Ascending aorta (tissue), 2 donors: ENCODE measurements at regions of chr19 and their contacts with region 1.

Region 1: GRCh38 chr19:9323919-9324583 is at the start of gene ZNF559:
- DNase-seq: peak; percentile 70 to 96
- H3K4me3 ChIP-seq: peak within 1 kb of the TSS; percentile 72 to 76
- H3K27ac ChIP-seq: peak within 1 kb of the TSS; percentile 87 to 90
- H3K4me1 ChIP-seq: peaks cover 0 to 7% of the 10 kb centered on the region in 2 donors
- H3K27me3 ChIP-seq: no peaks in the 10 kb centered on the region
- CTCF ChIP-seq: peak in 2 of 3 experiments; percentile 22 to 29
- total RNA-seq, gene ZNF559: 1.5 TPM

Region 2: DNA sequence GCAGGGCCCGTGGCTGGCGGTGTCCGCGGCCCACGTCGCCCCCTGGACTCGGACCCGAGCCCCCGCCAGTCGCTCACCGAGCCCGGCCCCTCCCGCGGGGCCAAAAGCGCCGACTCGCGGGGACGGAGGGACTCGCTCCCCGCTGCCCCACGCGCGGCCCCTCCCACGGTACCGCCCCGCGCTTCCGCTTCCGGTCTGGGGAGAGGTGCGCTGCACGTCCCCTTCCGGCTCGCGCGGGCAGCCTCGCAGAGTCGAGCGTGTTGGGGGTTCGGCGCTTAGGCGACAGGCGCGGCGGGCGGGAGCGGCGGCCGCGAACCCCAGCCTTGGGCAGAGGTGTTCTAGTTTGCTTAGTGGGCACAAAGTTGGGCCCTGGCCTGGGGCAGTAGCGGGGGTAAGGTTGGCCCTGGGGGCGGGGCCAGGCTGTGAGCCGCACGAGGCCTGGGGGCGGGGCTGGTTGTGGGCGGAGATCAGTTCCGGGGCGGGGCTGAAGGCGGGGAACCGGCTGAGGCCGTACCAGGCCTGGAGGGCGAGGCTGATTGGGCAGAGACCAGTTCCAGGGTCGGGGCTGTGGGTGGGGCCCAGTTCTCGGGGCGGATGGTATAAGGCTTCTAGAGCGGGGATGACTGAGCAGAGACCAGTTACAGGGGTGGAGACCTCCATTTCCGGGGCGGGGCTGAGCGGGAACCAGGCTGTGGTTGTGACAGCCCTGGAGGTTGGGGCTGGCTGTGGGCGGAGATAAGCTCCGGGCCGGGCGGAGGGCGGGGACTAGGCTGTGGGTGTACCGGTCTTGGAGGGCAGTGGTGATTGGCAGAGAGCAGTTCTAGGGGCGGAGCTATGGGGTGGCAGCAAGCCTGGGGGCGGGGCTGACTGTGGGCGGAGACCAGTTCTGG is 491.7 kb before region 1 on chr19 and contains the starts of genes MBD3L1 and ZNF558:
- intact Hi-C with region 1: loop called (anchors 5 kb)
- DNase-seq: peak; percentile 99 to 100
- H3K4me3 ChIP-seq: peak within 1 kb of the TSS; percentile 89 to 98
- H3K27ac ChIP-seq: peak within 1 kb of the TSS; percentile 88 to 98
- H3K4me1 ChIP-seq: peaks cover 0 to 8% of the 10 kb centered on the region in 2 donors
- H3K27me3 ChIP-seq: no peaks in the 10 kb centered on the region
- CTCF ChIP-seq: peak; percentile 7 to 56 (median 49)
- total RNA-seq, gene MBD3L1: not detected
- total RNA-seq, gene ZNF558: 12.8 TPM

Region 3: DNA sequence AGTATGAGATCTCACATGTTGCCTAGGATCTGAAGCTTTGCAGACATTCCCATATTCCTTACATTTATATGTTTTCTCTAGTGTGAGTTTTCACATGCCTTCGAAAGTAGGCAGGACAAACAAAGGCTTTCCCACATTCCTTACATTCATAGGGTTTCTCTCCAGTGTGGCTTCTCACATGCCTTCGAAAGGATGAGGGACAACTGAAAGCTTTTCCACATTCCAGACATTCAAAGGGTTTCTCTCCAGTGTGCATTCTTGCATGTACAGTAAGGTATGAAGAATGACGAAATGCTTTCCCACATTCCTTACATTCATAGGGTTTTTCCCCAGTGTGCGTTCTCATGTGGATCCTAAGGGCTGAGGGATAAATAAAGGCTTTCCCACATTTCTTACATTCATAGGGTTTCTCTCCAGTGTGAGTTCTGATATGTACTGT is 28.6 kb before region 1 on chr19:
- intact Hi-C with region 1: no loop called
- DNase-seq: no peak
- H3K4me3 ChIP-seq: no peak overlapping the region
- H3K27ac ChIP-seq: no peak overlapping the region
- H3K4me1 ChIP-seq: no peaks in the 10 kb centered on the region
- H3K27me3 ChIP-seq: no peaks in the 10 kb centered on the region
- CTCF ChIP-seq: no peak

Region 4: GRCh38 chr19:9309139-9309973 is 14.7 kb before region 1 on chr19 and contains the start of gene ZNF699:
- intact Hi-C with region 1: loop called (anchors 1 kb)
- DNase-seq: peak; percentile 91 to 99
- H3K4me3 ChIP-seq: peak within 1 kb of the TSS; percentile 73 to 87
- H3K27ac ChIP-seq: peak within 1 kb of the TSS; percentile 95 to 96
- H3K4me1 ChIP-seq: peaks cover 0 to 5% of the 10 kb centered on the region in 2 donors
- H3K27me3 ChIP-seq: no peaks in the 10 kb centered on the region
- CTCF ChIP-seq: no peak
- total RNA-seq, gene ZNF699: 6.8 TPM

Region 5: GRCh38 chr19:9381367-9381785 is 57.3 kb after region 1 on chr19:
- intact Hi-C with region 1: no loop called
- DNase-seq: no peak
- H3K4me3 ChIP-seq: no peak overlapping the region
- H3K27ac ChIP-seq: no peak overlapping the region
- H3K4me1 ChIP-seq: no peaks in the 10 kb centered on the region
- H3K27me3 ChIP-seq: no peaks in the 10 kb centered on the region
- CTCF ChIP-seq: no peak

Region 6: DNA sequence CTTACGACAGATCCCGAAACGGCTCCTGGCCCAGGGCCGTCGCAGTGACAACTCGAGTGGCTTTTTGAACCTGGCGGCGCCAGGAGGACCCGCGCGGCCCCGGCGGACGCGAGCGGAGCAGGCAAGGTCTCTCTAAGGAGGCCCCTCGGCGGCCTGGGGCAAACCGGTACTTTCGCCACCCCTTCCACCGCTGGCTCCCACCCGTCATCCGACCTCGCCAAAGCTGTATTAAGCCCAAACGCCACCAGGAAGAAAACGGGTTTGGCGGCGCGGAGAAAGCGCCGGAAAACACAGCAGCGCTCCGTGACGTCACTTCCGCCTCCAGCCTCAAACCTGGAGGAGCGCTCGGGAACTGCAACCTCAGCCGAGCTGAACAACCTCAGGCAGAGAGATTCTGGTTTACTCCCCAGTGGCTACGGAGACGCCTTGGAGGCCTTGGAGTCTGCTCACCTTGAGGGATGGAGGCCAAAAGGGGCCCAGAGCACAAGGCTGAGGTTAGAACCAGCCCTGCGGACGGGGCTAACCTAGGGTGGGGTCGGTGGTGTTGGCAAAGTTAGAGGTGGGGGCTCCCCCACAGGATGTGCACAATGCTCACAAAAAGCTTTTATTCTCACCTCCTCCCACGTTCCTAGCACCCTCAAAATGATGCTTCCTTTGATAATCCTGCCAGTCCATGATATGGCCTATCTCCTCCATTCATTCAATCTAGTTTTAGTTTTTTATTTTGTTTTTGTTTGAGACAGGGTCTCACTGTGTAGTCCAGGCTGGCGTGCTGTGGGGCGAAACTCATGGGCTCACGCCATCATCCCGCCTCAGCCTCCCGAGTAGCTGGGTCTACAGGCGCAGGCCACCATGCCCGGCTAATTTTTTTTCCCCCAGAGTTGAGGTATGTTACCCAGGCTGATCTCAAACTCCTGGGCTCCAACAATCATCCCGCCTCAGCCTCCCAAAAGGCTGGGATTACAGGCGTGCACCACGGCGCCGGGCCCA is 111.5 kb after region 1 on chr19 and contains the start of gene ZNF266:
- intact Hi-C with region 1: loop called (anchors 5 kb)
- DNase-seq: peak; percentile 49 to 93
- H3K4me3 ChIP-seq: peak within 1 kb of the TSS; percentile 82 to 87
- H3K27ac ChIP-seq: peak within 1 kb of the TSS; percentile 84 to 85
- H3K4me1 ChIP-seq: peaks cover 6 to 12% of the 10 kb centered on the region in 2 donors
- H3K27me3 ChIP-seq: no peaks in the 10 kb centered on the region
- CTCF ChIP-seq: peak; percentile 75 to 86 (median 78)
- total RNA-seq, gene ZNF266: 54.2 TPM

Region 7: GRCh38 chr19:9498183-9498902 is 174.3 kb after region 1 on chr19 and contains the start of gene ZNF560:
- intact Hi-C with region 1: no loop called
- DNase-seq: no peak
- H3K4me3 ChIP-seq: no peak within 1 kb of the TSS
- H3K27ac ChIP-seq: no peak within 1 kb of the TSS
- H3K4me1 ChIP-seq: no peaks in the 10 kb centered on the region
- H3K27me3 ChIP-seq: no peaks in the 10 kb centered on the region
- CTCF ChIP-seq: no peak
- total RNA-seq, gene ZNF560: not detected

Region 8: GRCh38 chr19:9538183-9539058 is 214.4 kb after region 1 on chr19 and contains the start of gene ZNF426:
- intact Hi-C with region 1: loop called (anchors 5 kb)
- DNase-seq: peak; percentile 37 to 89
- H3K4me3 ChIP-seq: peak within 1 kb of the TSS; percentile 79 to 80
- H3K27ac ChIP-seq: peak within 1 kb of the TSS; percentile 89 to 90
- H3K4me1 ChIP-seq: peaks cover 0 to 8% of the 10 kb centered on the region in 2 donors
- H3K27me3 ChIP-seq: no peaks in the 10 kb centered on the region
- CTCF ChIP-seq: no peak
- total RNA-seq, gene ZNF426: 24.6 TPM

Region 9: GRCh38 chr19:9621156-9622037 is 297.3 kb after region 1 on chr19 and contains the start of gene ZNF561:
- intact Hi-C with region 1: loop called (anchors 5 kb)
- DNase-seq: peak; percentile 14 to 90
- H3K4me3 ChIP-seq: peak within 1 kb of the TSS; percentile 83 to 87
- H3K27ac ChIP-seq: peak within 1 kb of the TSS; percentile 89 to 91
- H3K4me1 ChIP-seq: peaks cover 0 to 17% of the 10 kb centered on the region in 2 donors
- H3K27me3 ChIP-seq: no peaks in the 10 kb centered on the region
- CTCF ChIP-seq: no peak
- total RNA-seq, gene ZNF561: 35.4 TPM